ENCODE measurements at regions of chr2 and their contacts with region 1.

Region 1: DNA sequence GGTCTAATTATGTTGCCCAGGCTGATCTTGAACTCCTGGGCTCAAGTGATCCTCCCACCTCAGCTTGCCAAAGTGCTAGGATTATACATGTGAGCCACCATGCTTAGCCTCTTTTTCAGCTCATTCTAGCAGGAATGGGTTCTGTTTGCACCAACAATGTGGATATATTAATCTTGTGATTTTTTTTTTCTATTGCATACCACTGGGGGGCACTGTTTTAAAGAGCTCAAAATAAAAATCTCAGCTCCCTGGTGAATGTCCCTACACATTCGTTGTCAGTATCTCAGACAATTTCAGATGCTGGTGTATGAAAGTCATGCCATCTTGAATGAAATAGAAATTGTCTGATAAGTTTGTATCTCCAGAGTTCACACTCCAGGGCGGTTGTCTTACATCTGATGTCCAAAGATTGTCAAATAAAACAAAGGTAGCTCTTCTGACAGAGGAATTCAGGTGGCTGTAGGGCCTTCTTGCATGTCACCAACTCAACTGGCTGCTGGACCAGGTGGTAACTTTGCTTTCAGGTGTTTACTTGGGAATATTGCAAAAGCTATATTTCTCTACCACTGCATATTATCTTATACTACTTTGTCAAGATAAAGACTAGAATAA is 3.1 kb upstream of the MATN3 start:
- DNase-seq: peak; percentile 18
- H3K4me3 ChIP-seq: no peak overlapping the region
- H3K27ac ChIP-seq: no peak overlapping the region
- H3K27me3 ChIP-seq: no peaks in the 10 kb centered on the region
- CTCF ChIP-seq: peak; percentile 63

Region 2: GRCh38 chr2:19568809-19569791 is 446.5 kb before region 1 on chr2:
- CTCF ChIA-PET with region 1: no interaction called
- POLR2A ChIA-PET with region 1: no interaction called
- DNase-seq: no peak
- H3K4me3 ChIP-seq: no peak overlapping the region
- H3K27ac ChIP-seq: no peak overlapping the region
- H3K27me3 ChIP-seq: no peaks in the 10 kb centered on the region
- CTCF ChIP-seq: no peak

Region 3: GRCh38 chr2:19955544-19956422 is 59.8 kb before region 1 on chr2:
- CTCF ChIA-PET with region 1: interaction called, 15 read pairs
- POLR2A ChIA-PET with region 1: no interaction called
- DNase-seq: peak; percentile 48
- H3K4me3 ChIP-seq: no peak overlapping the region
- H3K27ac ChIP-seq: no peak overlapping the region
- H3K27me3 ChIP-seq: no peaks in the 10 kb centered on the region
- CTCF ChIP-seq: peak; percentile 94

Region 4: DNA sequence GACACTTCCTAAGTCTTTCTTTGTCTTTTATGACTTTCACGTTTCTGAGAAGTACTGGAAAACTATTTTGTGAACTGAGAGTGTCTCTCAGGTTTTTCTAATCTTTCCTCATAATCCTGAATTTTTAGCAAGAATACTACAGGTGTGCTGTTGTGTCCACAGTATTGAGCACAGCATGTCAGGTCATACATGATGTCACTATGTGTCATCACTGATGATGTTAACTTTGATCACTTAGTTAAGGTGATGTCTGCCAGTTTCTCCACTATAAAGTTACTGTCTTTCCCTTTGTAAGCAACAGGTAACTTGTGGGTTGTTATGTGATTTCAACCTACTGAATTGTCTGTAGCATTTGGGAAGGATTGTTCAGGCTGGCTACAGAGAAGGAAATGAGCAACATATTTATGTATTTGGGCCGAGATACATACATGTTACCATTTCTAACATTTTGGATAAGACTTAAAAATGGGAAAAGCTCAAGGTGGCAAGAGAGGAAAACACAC is 14.2 kb before region 1 on chr2:
- CTCF ChIA-PET with region 1: interaction called, 38 read pairs
- POLR2A ChIA-PET with region 1: no interaction called
- DNase-seq: no peak
- H3K4me3 ChIP-seq: no peak overlapping the region
- H3K27ac ChIP-seq: no peak overlapping the region
- H3K27me3 ChIP-seq: no peaks in the 10 kb centered on the region
- CTCF ChIP-seq: no peak

Region 5: GRCh38 chr2:20051532-20052228 is 36.1 kb after region 1 on chr2 and contains the start of gene LAPTM4A:
- CTCF ChIA-PET with region 1: interaction called, 34 read pairs
- POLR2A ChIA-PET with region 1: interaction called, 3 read pairs
- DNase-seq: peak; percentile 100
- H3K4me3 ChIP-seq: peak within 1 kb of the TSS; percentile 97
- H3K27ac ChIP-seq: peak within 1 kb of the TSS; percentile 100
- H3K27me3 ChIP-seq: no peaks in the 10 kb centered on the region
- CTCF ChIP-seq: 0 out of 2 replicates have a peak, but pooled peaks have one; percentile 10
- polyA plus RNA-seq, gene LAPTM4A: 1,309 and 1,416 TPM in 2 replicates

Region 6: GRCh38 chr2:20080839-20081415 is 65.3 kb after region 1 on chr2:
- CTCF ChIA-PET with region 1: interaction called, 13 read pairs
- POLR2A ChIA-PET with region 1: no interaction called
- DNase-seq: no peak
- H3K4me3 ChIP-seq: no peak overlapping the region
- H3K27ac ChIP-seq: no peak overlapping the region
- H3K27me3 ChIP-seq: peaks cover 2% of the 10 kb centered on the region
- CTCF ChIP-seq: no peak

Region 7: GRCh38 chr2:20291106-20291564 is 275.6 kb after region 1 on chr2:
- CTCF ChIA-PET with region 1: interaction called, 17 read pairs
- POLR2A ChIA-PET with region 1: no interaction called
- DNase-seq: peak; percentile 44
- H3K4me3 ChIP-seq: no peak overlapping the region
- H3K27ac ChIP-seq: no peak overlapping the region
- H3K27me3 ChIP-seq: no peaks in the 10 kb centered on the region
- CTCF ChIP-seq: peak; percentile 70

Measured in AG04450 (cell line).